ENCODE measurements at regions of chr9 and their contacts with region 1.

Region 1: GRCh38 chr9:29830821-29831220 is 2257.5 kb upstream of the C9orf72 start:
- DNase-seq: peak; percentile 43
- ATAC-seq: peak; percentile 75
- H3K4me3 ChIP-seq: no peak overlapping the region
- H3K27ac ChIP-seq: no peak overlapping the region
- H3K4me1 ChIP-seq: no peaks in the 10 kb centered on the region
- H3K27me3 ChIP-seq: no peaks in the 10 kb centered on the region
- CTCF ChIP-seq: peak; percentile 69
- EP300 ChIP-seq: no peak
- POLR2A ChIP-seq: no peak
- RAD21 ChIP-seq: peak; percentile 59

Region 2: GRCh38 chr9:30774326-30774725 is 943.5 kb after region 1 on chr9:
- CTCF ChIA-PET with region 1: no interaction called
- POLR2A ChIA-PET with region 1: no interaction called
- in situ Hi-C with region 1: no loop called
- intact Hi-C with region 1: loop called (anchors 2 kb)
- DNase-seq: peak; percentile 28
- ATAC-seq: peak; percentile 89
- H3K4me3 ChIP-seq: no peak overlapping the region
- H3K27ac ChIP-seq: no peak overlapping the region
- H3K4me1 ChIP-seq: no peaks in the 10 kb centered on the region
- H3K27me3 ChIP-seq: no peaks in the 10 kb centered on the region
- CTCF ChIP-seq: peak; percentile 53
- EP300 ChIP-seq: no peak
- POLR2A ChIP-seq: no peak
- RAD21 ChIP-seq: no peak

Region 3: DNA sequence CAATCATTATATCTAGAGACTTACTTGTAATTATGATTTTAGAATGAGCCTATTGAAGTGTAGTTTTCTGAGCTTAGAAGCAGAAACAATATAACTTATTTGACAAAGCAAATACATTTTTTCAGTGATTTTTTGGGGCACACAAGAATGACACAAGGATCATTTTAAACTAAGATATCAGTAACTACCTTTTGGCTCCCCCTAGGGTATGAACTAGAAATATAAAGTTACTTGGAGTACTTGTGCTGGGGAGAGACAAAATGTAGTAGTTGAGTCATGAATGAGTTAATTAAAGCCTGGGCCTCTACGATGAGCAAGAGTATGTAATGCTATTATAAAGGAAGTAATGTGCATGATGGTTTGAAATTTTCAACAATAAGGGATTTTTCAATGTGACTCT is 1309.5 kb after region 1 on chr9:
- CTCF ChIA-PET with region 1: no interaction called
- POLR2A ChIA-PET with region 1: no interaction called
- in situ Hi-C with region 1: no loop called
- intact Hi-C with region 1: loop called (anchors 2 kb)
- DNase-seq: peak; percentile 6
- ATAC-seq: no peak
- H3K4me3 ChIP-seq: no peak overlapping the region
- H3K27ac ChIP-seq: no peak overlapping the region
- H3K4me1 ChIP-seq: no peaks in the 10 kb centered on the region
- H3K27me3 ChIP-seq: no peaks in the 10 kb centered on the region
- CTCF ChIP-seq: peak; percentile 37
- EP300 ChIP-seq: no peak
- POLR2A ChIP-seq: no peak
- RAD21 ChIP-seq: no peak

Region 4: DNA sequence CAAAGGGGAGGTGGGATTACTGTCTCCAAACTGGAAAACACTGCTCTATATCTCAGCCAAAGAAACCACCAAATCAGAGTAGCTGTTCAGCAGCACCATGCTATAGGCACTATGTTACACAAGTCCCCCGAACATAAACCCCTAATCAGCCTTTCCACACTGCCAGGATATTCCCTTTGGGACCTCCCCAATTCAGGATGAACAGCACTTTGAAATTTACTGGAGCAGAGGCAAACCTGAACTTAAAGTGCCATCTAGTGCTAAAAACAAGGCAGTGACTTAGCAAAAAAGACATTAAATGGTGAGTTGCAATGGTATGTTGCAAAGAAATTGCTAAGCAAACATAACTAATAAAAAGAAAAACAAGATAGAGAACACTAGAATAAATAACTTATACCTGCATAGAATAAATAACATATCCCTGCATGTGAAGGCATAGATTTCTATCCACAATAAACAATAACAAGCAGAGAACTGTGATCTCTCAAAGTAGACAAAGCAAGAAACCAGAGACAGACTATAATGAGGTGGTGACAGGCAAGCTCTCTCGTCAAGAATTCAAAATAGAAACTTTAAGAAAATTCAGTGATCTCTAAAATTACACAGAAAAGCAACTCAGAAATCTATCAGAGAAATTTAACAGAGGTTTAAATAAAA is 1969.3 kb after region 1 on chr9:
- CTCF ChIA-PET with region 1: interaction called, 4 read pairs
- POLR2A ChIA-PET with region 1: no interaction called
- in situ Hi-C with region 1: loop called (anchors 25 kb)
- intact Hi-C with region 1: loop called (anchors 2 kb)
- DNase-seq: peak; percentile 24
- ATAC-seq: peak; percentile 71
- H3K4me3 ChIP-seq: no peak overlapping the region
- H3K27ac ChIP-seq: no peak overlapping the region
- H3K4me1 ChIP-seq: no peaks in the 10 kb centered on the region
- H3K27me3 ChIP-seq: no peaks in the 10 kb centered on the region
- CTCF ChIP-seq: peak; percentile 77
- EP300 ChIP-seq: no peak
- POLR2A ChIP-seq: no peak
- RAD21 ChIP-seq: peak; percentile 66